K562 (cell line): ENCODE measurements at regions of chr12 and their contacts with region 1.

Region 1: DNA sequence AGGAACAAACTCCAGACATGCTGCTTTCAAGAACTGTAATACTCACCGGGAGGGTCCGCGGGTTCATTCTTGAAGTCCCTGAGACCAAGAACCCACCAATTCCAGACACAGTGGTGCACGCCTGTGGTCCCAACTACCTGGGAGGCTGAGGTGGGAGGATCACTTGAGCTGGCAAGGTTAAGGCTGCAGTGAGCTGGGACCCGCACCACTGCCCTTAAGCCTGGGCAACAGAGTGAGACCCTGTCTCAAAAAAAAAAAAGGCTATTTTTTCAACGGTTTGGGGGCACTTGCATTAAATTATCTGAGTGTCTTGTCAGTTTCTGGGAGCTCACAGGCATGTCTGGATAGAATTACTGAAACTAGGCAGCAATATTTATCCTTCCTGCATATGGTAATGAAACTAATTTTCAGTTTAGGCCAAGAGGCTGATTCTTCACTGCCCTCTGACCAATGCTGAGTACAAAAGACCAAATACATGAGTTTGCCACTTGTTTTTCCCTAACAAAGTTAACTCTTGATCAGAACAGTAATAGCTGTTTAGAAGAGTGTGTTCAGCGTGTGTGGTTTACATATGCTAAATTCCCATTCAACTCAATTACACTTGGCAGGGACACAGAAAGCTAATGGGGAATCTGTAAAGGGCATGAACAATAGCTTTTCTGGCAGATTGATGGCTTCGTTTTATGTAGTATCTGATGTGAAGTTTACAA is 65.8 kb upstream of the RASSF3 start:
- DNase-seq: no peak
- ATAC-seq: no peak
- H3K4me3 ChIP-seq: no peak overlapping the region
- H3K27ac ChIP-seq: no peak overlapping the region
- H3K4me1 ChIP-seq: no peaks in the 10 kb centered on the region; a peak in 1 of 5 replicates
- H3K27me3 ChIP-seq: peaks cover 16 to 26% of the 10 kb centered on the region in 2 experiments
- CTCF ChIP-seq: no peak
- EP300 ChIP-seq: no peak
- POLR2A ChIP-seq: no peak
- RAD21 ChIP-seq: no peak

Region 2: DNA sequence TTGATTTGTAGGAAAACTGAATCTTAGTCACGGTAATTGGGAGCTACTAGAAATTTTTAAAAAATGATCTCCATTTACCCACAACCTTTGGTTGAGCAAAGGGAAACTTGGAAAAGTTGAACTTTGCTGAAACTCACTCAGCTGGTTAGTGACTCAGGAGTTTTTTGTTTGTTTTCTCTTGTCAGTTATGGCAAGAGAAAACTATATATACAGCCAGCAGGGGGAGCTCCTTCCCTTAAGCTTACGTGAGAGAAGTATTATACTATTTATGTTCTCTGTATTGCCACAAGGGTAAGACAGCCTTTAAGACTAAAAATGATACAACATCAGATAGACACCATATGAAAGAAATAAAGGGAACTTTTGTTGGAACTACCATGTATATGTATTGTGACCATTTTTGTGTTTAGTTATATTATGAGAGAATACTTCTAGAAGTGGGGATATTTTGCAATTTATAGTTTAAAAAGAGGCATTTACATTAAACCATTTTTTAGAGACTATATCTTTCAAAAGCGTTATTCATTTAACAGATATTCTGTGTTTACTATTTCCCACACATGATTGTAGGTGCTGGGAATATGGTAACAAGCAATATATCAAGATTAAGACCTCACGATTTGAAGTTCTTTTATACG is 251.8 kb after region 1 on chr12:
- CTCF ChIA-PET with region 1: no interaction called
- POLR2A ChIA-PET with region 1: no interaction called
- in situ Hi-C with region 1: loop called (anchors 10 kb)
- intact Hi-C with region 1: loop called (anchors 2 kb)
- DNase-seq: peak; percentile 62 to 90 (median 70)
- ATAC-seq: peak; percentile 97
- H3K4me3 ChIP-seq: no peak overlapping the region
- H3K27ac ChIP-seq: no peak overlapping the region
- H3K4me1 ChIP-seq: no peaks in the 10 kb centered on the region
- H3K27me3 ChIP-seq: peaks cover 5 to 13% of the 10 kb centered on the region in 2 experiments; a peak in 4 of 5 replicates
- CTCF ChIP-seq: peak; percentile 76 to 96 (median 89)
- EP300 ChIP-seq: peak; percentile 54
- POLR2A ChIP-seq: no peak
- RAD21 ChIP-seq: peak; percentile 45 to 69